K562 (cell line): ENCODE measurements at regions of chr1 and their contacts with region 1.

Region 1: GRCh38 chr1:180365039-180365438 is 135.0 kb downstream of the LHX4 start:
- DNase-seq: peak; percentile 18 to 35 (median 28)
- ATAC-seq: peak; percentile 86
- H3K4me3 ChIP-seq: no peak overlapping the region
- H3K27ac ChIP-seq: no peak overlapping the region
- H3K4me1 ChIP-seq: no peaks in the 10 kb centered on the region
- H3K27me3 ChIP-seq: no peaks in the 10 kb centered on the region
- CTCF ChIP-seq: peak; percentile 49 to 67 (median 62); a peak in 5 of 6 replicates
- EP300 ChIP-seq: no peak
- POLR2A ChIP-seq: no peak
- RAD21 ChIP-seq: peak in 1 of 2 experiments; percentile 45; a peak in 3 of 4 replicates

Region 2: GRCh38 chr1:180144659-180145357 is 220.2 kb before region 1 on chr1:
- CTCF ChIA-PET with region 1: no interaction called
- POLR2A ChIA-PET with region 1: no interaction called
- in situ Hi-C with region 1: no loop called
- intact Hi-C with region 1: no loop called
- DNase-seq: no peak
- ATAC-seq: peak; percentile 60
- H3K4me3 ChIP-seq: no peak overlapping the region
- H3K27ac ChIP-seq: no peak overlapping the region
- H3K4me1 ChIP-seq: no peaks in the 10 kb centered on the region
- H3K27me3 ChIP-seq: no peaks in the 10 kb centered on the region
- CTCF ChIP-seq: no peak
- EP300 ChIP-seq: no peak
- POLR2A ChIP-seq: no peak
- RAD21 ChIP-seq: no peak

Region 3: DNA sequence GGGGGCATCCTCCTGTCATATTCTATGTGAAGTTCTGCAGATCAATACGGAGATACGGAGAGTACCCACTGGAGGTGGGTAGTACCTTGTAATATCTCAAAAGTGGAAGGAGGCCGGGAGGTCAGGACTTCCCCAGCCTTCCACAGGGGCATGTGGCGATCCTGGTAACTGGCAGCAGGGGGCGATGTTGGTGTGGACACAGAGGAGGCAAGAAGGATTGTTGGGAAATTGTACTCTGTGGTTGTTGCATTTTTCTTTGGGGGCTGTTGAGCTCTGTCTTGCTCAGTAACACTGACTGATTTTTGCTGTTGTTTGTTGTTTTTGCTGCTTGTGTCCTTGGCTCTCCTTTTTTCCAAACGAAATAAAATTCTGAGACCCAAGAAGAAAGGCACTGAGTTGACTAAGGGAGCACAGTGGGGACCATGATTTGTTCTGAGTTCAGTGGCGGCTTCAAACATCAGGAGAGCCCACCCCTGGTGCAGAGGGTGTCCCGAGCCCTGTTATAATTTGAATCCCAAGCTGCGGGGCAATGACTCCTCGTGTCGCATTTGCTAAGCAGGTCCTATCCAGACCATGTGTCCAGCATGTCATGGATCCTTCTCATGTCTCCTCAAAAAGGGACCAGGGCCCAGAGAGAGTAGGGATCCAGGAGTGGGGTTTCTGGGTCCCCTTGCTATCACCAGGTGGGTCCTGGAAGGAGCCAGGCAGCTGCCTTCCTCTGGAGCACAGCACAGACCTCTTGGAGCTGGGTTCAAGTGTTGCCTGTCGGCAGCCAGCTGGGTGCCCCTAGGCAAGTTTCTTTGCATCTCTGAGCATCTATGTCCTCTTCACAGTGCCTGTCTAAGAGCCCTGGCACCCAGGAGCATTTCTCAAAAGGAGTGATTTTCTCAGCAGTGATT is 112.2 kb before region 1 on chr1:
- CTCF ChIA-PET with region 1: no interaction called
- POLR2A ChIA-PET with region 1: no interaction called
- in situ Hi-C with region 1: no loop called
- intact Hi-C with region 1: loop called (anchors 5 kb)
- DNase-seq: peak; percentile 81 to 88 (median 86)
- ATAC-seq: peak; percentile 82
- H3K4me3 ChIP-seq: no peak overlapping the region
- H3K27ac ChIP-seq: no peak overlapping the region
- H3K4me1 ChIP-seq: peaks cover 0 to 21% of the 10 kb centered on the region in 2 experiments; a peak in 3 of 5 replicates
- H3K27me3 ChIP-seq: peaks cover 17 to 47% of the 10 kb centered on the region in 2 experiments; a peak in 4 of 5 replicates
- CTCF ChIP-seq: peak; percentile 96 to 99 (median 98)
- EP300 ChIP-seq: no peak
- POLR2A ChIP-seq: no peak
- RAD21 ChIP-seq: peak; percentile 87 to 97

Region 4: GRCh38 chr1:180415985-180416633 is 51.1 kb after region 1 on chr1:
- CTCF ChIA-PET with region 1: no interaction called
- POLR2A ChIA-PET with region 1: no interaction called
- in situ Hi-C with region 1: no loop called
- intact Hi-C with region 1: loop called (anchors 5 kb)
- DNase-seq: peak; percentile 47 to 58 (median 48)
- ATAC-seq: peak; percentile 94
- H3K4me3 ChIP-seq: no peak overlapping the region
- H3K27ac ChIP-seq: no peak overlapping the region
- H3K4me1 ChIP-seq: no peaks in the 10 kb centered on the region
- H3K27me3 ChIP-seq: no peaks in the 10 kb centered on the region
- CTCF ChIP-seq: peak; percentile 48 to 88 (median 58); a peak in 5 of 6 replicates
- EP300 ChIP-seq: no peak
- POLR2A ChIP-seq: no peak
- RAD21 ChIP-seq: peak; percentile 62 to 88

Region 5: DNA sequence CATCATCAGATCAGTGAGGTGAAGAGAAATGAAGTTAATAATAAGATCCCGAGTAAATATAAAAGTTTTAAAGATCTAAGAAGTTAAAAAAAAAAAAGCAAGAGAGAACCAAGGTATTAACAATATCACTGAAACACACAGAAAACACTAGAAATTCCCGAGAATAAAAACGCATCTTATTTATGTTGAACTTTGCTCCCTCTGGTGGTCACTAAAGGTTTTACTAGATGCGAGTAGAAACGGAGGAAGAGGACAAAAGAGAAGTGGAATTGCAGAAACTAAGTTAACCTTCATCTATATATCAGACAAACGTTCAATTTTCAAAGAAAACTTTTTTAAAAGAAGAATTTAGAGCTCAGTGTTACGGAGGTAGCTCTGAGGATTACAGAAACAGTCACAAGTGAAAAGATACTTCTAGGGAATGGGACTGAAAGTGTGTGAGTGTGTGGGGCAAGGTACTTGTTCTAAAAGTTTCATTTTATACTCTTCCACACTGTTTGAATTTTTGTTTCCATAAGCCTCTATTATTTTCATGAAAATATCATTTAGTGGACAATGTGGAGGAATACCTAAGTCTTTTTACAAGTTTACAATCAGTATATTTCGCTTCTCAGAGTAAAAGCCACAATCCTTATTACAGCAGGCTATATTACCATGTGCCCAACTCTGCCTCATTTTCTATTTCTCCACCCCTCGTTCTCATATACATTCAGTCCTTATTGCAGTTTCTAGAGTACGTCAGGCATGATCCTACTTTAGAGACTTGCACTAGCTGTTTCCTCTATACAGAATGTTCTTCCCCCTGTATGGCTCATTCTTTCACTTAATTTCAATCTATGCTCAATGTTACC is 117.6 kb after region 1 on chr1:
- CTCF ChIA-PET with region 1: interaction called, 4 read pairs
- POLR2A ChIA-PET with region 1: no interaction called
- in situ Hi-C with region 1: no loop called
- intact Hi-C with region 1: loop called (anchors 5 kb)
- DNase-seq: peak; percentile 53 to 79 (median 54)
- ATAC-seq: peak; percentile 78
- H3K4me3 ChIP-seq: no peak overlapping the region
- H3K27ac ChIP-seq: no peak overlapping the region
- H3K4me1 ChIP-seq: no peaks in the 10 kb centered on the region
- H3K27me3 ChIP-seq: no peaks in the 10 kb centered on the region
- CTCF ChIP-seq: peak; percentile 64 to 82 (median 73); a peak in 5 of 6 replicates
- EP300 ChIP-seq: no peak
- POLR2A ChIP-seq: no peak
- RAD21 ChIP-seq: peak; percentile 49 to 64; a peak in 3 of 4 replicates